ENCODE measurements at regions of chr10 and their contacts with region 1.

Region 1: DNA sequence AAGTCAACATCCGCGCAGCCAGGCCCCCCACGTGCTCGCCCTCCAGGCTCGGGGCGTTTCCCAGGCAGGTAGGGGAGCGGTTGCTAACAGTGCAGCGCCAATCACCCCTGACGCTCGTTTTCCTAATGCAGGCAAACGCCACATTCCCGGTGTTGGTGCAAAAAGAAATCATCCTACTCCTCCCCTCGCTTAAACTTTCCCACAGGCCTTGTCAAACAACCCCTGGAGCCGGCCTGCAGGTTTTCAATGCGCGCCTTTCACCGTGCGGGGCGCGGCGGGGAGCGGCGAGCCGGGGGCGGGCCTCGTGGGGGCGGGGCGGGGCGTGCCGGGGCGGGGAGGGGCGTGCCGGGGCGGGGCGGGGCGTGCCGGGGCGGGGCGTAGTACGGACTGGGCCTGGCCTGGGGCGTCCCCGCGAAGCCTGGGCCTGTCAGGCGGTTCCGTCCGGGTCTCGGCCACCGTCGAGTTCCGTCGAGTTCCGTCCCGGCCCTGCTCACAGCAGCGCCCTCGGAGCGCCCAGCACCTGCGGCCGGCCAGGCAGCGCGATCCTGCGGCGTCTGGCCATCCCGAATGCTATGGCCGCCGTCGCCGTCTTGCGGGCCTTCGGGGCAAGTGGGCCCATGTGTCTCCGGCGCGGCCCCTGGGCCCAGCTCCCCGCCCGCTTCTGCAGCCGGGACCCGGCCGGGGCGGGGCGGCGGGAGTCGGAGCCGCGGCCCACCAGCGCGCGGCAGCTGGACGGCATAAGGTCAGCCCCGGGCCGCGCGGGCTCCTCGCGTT is at the start of gene ECHDC3:
- DNase-seq: peak; percentile 61 to 75
- ATAC-seq: peak; percentile 66 to 91 (median 83)
- H3K4me3 ChIP-seq: peak within 1 kb of the TSS; percentile 36 to 69 (median 64)
- H3K27ac ChIP-seq: peak within 1 kb of the TSS; percentile 86 to 97 (median 94)
- H3K4me1 ChIP-seq: peaks cover 0 to 38% (median 18%) of the 10 kb centered on the region in 9 donors
- H3K27me3 ChIP-seq: peaks cover 0 to 9% (median 0%) of the 10 kb centered on the region in 7 donors
- CTCF ChIP-seq: no peak
- total RNA-seq, gene ECHDC3: 39.6 to 114 (median 57.1) TPM

Region 2: GRCh38 chr10:11510736-11511135 is 231.5 kb before region 1 on chr10:
- intact Hi-C with region 1: loop called in 2 of 10 experiments (anchors 5 kb)
- DNase-seq: no peak
- ATAC-seq: peak in 1 of 8 donors; percentile 55
- H3K4me3 ChIP-seq: no peak overlapping the region
- H3K27ac ChIP-seq: no peak overlapping the region
- H3K4me1 ChIP-seq: peaks cover 0 to 11% (median under 1%) of the 10 kb centered on the region in 9 donors
- H3K27me3 ChIP-seq: no peaks in the 10 kb centered on the region
- CTCF ChIP-seq: no peak

Region 3: DNA sequence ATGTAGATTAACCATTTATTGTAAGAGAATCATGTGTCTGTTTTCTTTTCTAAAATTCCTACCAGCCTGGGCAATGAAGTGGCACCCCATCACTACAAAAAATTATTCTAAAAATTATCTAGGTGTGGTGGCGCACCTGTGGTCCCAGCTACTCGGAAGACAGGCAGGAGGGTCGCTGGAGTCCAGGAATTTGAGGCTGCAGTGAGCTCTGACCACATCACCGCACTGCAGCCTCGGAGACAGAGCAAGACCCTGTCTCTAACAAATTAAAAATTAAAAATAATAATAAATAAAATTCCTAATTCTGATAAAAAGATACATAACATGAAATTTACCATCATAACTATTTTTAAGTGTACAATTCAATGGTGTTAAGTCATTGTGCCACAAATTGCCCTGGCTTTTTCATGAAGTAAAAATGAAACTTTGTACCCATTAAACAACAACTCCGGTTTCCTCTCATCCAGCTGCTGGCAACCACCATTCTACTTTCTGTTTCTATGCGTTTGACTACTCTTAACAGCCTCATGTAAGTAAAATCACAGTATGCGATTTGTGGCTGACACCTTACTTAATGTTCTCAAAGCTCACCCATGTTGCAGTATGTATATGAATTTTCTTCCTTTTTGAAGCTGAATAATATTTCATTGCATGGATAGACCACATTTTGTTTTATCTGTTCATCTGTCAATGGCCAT is 110.2 kb before region 1 on chr10:
- intact Hi-C with region 1: no loop called
- DNase-seq: no peak
- ATAC-seq: no peak
- H3K4me3 ChIP-seq: no peak overlapping the region
- H3K27ac ChIP-seq: peak overlapping the region in 1 of 10 donors; percentile 47
- H3K4me1 ChIP-seq: peaks cover 0 to 9% (median 0%) of the 10 kb centered on the region in 9 donors
- H3K27me3 ChIP-seq: peaks cover 0 to 4% (median 0%) of the 10 kb centered on the region in 7 donors
- CTCF ChIP-seq: no peak

Region 4: GRCh38 chr10:11782793-11783557 is 40.8 kb after region 1 on chr10:
- intact Hi-C with region 1: no loop called
- DNase-seq: no peak
- ATAC-seq: peak in 2 of 8 donors; percentile 44 to 47
- H3K4me3 ChIP-seq: no peak overlapping the region
- H3K27ac ChIP-seq: no peak overlapping the region
- H3K4me1 ChIP-seq: no peaks in the 10 kb centered on the region
- H3K27me3 ChIP-seq: peaks cover 0 to 13% (median 0%) of the 10 kb centered on the region in 7 donors
- CTCF ChIP-seq: peak; percentile 45 to 78 (median 68)